ENCODE measurements at regions of chr2 and their contacts with region 1.

Region 1: GRCh38 chr2:98444436-98445176 is at the start of gene INPP4A:
- DNase-seq: peak; percentile 77 to 91 (median 80)
- ATAC-seq: peak; percentile 74 to 96 (median 93)
- H3K4me3 ChIP-seq: peak within 1 kb of the TSS; percentile 51 to 98 (median 86)
- H3K27ac ChIP-seq: peak within 1 kb of the TSS; percentile 59 to 87 (median 76)
- H3K4me1 ChIP-seq: peaks cover 0 to 34% (median 17%) of the 10 kb centered on the region in 12 donors
- H3K27me3 ChIP-seq: no peaks in the 10 kb centered on the region
- CTCF ChIP-seq: peak in 4 of 12 donors; percentile 13 to 47 (median 34)
- POLR2A ChIP-seq: peak in 1 of 2 donors; percentile 79
- total RNA-seq, gene INPP4A: 15.2 to 30.5 (median 20.6) TPM

Region 2: DNA sequence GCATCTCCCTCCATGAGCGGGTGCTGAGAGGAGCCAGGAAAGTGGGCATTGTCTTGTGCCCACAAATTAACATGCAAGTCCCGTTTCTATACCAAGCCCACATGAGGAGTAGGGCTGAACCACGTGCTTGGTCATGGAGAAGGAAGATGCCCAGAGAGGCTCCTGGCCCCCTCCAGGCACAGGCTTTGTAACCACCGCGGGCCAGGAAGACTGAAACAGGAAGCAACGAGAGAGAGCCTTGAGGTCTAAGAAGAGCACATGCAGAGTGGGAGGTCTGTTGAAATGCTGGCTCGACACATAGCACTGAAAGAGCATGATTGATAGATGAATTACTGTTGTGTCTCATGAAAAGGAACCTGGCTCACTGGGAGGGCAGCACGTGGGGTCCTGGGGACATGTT is 321.3 kb before region 1 on chr2:
- intact Hi-C with region 1: no loop called
- DNase-seq: no peak
- ATAC-seq: no peak
- H3K4me3 ChIP-seq: no peak overlapping the region
- H3K27ac ChIP-seq: no peak overlapping the region
- H3K4me1 ChIP-seq: peaks cover 0 to 26% (median 4%) of the 10 kb centered on the region in 12 donors
- H3K27me3 ChIP-seq: peaks cover 0 to 3% (median 0%) of the 10 kb centered on the region in 9 donors
- CTCF ChIP-seq: no peak
- POLR2A ChIP-seq: no peak

Region 3: GRCh38 chr2:98479959-98480524 is 35.4 kb after region 1 on chr2:
- intact Hi-C with region 1: loop called in 2 of 10 experiments (anchors 5 kb)
- DNase-seq: peak; percentile 66 to 85 (median 79)
- ATAC-seq: peak; percentile 76 to 91 (median 88)
- H3K4me3 ChIP-seq: no peak overlapping the region
- H3K27ac ChIP-seq: peak overlapping the region in 8 of 12 donors; percentile 4 to 74 (median 44)
- H3K4me1 ChIP-seq: peaks cover 11 to 93% (median 73%) of the 10 kb centered on the region in 12 donors
- H3K27me3 ChIP-seq: no peaks in the 10 kb centered on the region
- CTCF ChIP-seq: no peak
- POLR2A ChIP-seq: no peak

Region 4: GRCh38 chr2:98502556-98503335 is 58.1 kb after region 1 on chr2:
- intact Hi-C with region 1: loop called in 4 of 10 experiments (anchors 5 to 10 kb)
- DNase-seq: no peak
- ATAC-seq: peak in 1 of 4 donors; percentile 27
- H3K4me3 ChIP-seq: no peak overlapping the region
- H3K27ac ChIP-seq: peak overlapping the region in 4 of 12 donors; percentile 1 to 21 (median 12)
- H3K4me1 ChIP-seq: peaks cover 7 to 79% (median 64%) of the 10 kb centered on the region in 12 donors
- H3K27me3 ChIP-seq: no peaks in the 10 kb centered on the region
- CTCF ChIP-seq: no peak
- POLR2A ChIP-seq: no peak

Region 5: GRCh38 chr2:98518090-98518489 is 73.5 kb after region 1 on chr2:
- intact Hi-C with region 1: loop called in 1 of 10 experiments (anchors 5 kb)
- DNase-seq: no peak
- ATAC-seq: peak in 3 of 4 donors; percentile 56 to 69 (median 61)
- H3K4me3 ChIP-seq: no peak overlapping the region
- H3K27ac ChIP-seq: peak overlapping the region in 1 of 12 donors; percentile 44
- H3K4me1 ChIP-seq: peaks cover 0 to 47% (median 17%) of the 10 kb centered on the region in 12 donors
- H3K27me3 ChIP-seq: no peaks in the 10 kb centered on the region
- CTCF ChIP-seq: peak in 11 of 12 donors; percentile 27 to 61 (median 54)
- POLR2A ChIP-seq: no peak

Region 6: GRCh38 chr2:98568881-98569793 is 124.5 kb after region 1 on chr2:
- intact Hi-C with region 1: loop called in 2 of 10 experiments (anchors 5 to 10 kb)
- DNase-seq: peak in 3 of 5 donors; percentile 39 to 49 (median 39)
- ATAC-seq: peak in 2 of 4 donors; percentile 33 to 38
- H3K4me3 ChIP-seq: no peak overlapping the region
- H3K27ac ChIP-seq: no peak overlapping the region
- H3K4me1 ChIP-seq: peaks cover 0 to 23% (median 6%) of the 10 kb centered on the region in 12 donors
- H3K27me3 ChIP-seq: no peaks in the 10 kb centered on the region
- CTCF ChIP-seq: peak; percentile 68 to 92 (median 81)
- POLR2A ChIP-seq: no peak